Motor neuron (in vitro differentiated cells): ENCODE measurements at regions of chr5 and their contacts with region 1.

Region 1: DNA sequence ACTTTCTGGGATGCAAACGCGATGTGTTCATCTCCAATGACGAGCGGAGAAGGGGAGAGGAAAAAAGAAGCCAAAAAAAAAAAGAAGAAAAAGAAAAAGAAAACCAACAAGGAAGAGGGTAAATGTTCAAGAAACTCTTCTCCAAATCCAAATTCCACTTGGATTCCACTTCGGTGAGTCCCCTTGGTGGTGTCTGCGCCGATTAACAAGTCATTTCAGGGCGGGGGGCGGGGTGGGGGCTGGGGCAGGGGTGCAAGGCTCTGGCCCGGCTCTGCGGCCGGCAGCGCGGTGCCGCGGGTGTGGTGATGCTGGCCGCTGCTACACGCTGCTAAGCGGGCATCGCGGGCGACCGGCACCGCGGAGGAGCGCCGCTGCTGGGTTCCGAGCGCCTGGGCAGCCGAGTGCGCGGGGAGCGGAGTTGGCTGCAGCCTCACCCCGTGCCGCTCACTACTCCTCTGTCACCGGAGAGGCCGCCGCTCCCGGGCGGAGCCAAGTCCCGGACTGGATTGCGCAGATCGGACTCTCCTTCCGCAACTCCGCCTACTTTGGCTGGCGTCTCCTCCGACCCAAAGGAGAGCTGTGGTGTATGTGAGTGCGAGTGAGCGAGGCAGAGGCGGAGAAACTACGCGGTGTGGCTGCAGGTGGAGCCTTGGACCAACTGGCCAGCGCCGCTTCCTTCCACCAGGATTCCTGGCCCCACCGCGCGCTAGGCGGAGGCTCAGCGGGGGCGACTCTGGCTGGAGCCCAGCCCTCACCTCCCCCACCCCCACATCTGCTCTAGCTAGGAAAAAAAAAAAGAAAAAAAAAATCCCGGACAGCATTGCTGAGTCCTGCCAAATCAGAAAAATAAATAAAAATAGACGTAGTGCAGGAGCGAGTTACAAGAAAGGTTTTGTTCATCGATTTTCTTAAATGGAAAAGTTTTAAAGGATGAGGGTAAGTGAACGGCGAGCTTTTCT is at the start of gene SEMA6A:
- ATAC-seq: peak; percentile 77 to 82 (median 78)
- H3K4me3 ChIP-seq: peak within 1 kb of the TSS; percentile 60 to 80 (median 71)
- H3K27ac ChIP-seq: peak within 1 kb of the TSS; percentile 8 to 64
- H3K4me1 ChIP-seq: peaks cover 6 to 9% of the 10 kb centered on the region in 2 donors
- total RNA-seq, gene SEMA6A: 2.6 to 35.9 (median 20.0) TPM

Region 2: DNA sequence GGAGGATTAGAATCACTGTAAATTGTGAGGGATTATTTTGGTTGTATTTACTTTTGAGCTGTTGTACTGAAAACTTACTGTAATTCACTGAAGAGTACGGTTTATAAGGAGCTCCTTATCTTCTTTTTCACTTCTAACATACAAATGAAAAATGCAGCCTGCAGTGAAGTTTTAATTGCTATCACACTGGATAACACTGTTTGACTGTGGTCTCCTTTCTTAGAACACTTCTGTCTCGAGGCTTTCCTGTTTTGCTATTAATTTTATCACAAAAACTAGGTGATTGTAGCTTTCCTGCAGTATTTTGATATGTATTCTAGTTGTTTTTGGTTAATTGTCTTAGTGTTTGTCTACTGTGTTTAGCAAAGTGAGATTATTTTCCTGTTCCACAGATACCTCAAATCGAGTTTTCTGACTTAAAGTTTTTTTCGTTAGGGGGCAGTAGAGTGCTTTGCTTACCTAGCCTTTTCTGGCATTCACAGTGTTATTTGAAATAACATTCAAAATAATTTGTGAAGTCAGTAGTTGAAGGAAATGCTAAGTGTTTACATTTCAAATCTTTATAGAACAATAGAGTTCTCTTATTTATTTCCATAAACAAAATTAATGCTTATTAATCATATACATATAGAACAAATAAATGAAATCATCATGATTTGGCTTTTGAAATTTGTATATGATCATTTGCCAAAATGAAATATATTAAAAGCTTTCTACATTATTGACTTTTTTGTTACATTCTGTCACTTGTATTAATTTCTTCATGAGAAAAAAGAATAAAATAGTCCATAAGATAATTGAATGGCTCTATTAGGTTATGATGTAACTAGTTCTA is 436.9 kb before region 1 on chr5:
- in situ Hi-C with region 1: loop called in 2 of 9 experiments (anchors 25 kb)
- ATAC-seq: peak in 4 of 8 experiments; percentile 45 to 62 (median 51)
- H3K4me3 ChIP-seq: no peak overlapping the region
- H3K27ac ChIP-seq: no peak overlapping the region
- H3K4me1 ChIP-seq: no peaks in the 10 kb centered on the region

Region 3: DNA sequence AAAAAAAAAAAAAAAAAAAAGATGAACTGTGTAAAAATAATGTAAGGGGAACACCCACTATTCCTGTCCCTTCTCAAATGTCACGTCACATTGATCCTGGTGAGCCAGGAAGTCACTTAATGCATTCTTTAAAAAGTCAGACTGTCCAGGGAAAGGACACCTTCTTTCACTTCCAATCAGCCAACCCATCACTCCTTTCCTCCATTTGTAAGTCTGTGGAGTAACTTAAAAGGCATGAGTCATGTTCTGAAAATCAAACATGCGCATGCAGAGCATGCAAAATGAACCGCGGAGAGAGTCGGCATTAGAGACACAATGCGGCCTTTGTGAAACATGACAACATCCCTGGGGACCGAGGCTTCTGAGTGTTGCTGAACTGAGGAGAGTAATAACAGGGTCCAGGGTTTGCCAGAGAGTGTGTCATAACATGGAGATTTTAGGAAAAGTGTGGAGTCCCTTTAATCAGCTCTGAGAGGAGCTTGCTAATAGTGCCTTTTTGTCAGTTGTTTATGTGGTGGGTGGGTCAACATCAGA is 77.6 kb after region 1 on chr5:
- in situ Hi-C with region 1: no loop called
- ATAC-seq: peak; percentile 95 to 99 (median 98)
- H3K4me3 ChIP-seq: no peak overlapping the region
- H3K27ac ChIP-seq: peak overlapping the region; percentile 5 to 64
- H3K4me1 ChIP-seq: peaks cover 20 to 30% of the 10 kb centered on the region in 2 donors